Natural killer cell (primary cell): ENCODE measurements at regions of chr12 and their contacts with region 1.

Region 1: DNA sequence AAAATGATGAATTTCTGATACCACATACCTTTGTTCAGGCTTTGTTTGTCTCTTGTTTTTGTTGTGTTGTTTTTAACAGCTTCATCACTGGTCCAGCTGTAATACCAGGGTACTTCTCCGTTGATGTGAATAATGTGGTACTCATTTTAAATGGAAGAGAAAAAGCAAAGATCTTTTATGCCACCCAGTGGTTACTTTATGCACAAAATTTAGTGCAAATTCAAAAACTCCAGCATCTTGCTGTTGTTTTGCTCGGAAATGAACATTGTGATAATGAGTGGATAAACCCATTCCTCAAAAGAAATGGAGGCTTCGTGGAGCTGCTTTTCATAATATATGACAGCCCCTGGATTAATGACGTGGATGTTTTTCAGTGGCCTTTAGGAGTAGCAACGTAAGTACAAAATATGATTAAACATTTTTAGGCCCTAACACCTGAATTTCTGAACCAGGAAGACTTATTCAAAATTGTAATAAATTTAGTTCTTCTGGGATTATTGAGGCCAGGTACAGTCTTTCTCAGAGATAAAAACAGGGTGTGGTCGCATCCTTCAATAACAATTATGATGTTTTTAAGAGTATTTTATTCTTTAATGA is 22.4 kb downstream of the RXYLT1 start:
- DNase-seq: peak in 1 of 2 donors; percentile 52
- ATAC-seq: no peak
- H3K4me3 ChIP-seq: no peak overlapping the region
- H3K4me3 Mint-ChIP-seq: no peak overlapping the region
- H3K27ac ChIP-seq: no peak overlapping the region
- H3K27ac Mint-ChIP-seq: no peak overlapping the region
- H3K4me1 ChIP-seq: no peaks in the 10 kb centered on the region
- H3K4me1 Mint-ChIP-seq: no peaks in the 10 kb centered on the region
- H3K27me3 ChIP-seq: no peaks in the 10 kb centered on the region
- H3K27me3 Mint-ChIP-seq: no peaks in the 10 kb centered on the region
- CTCF ChIP-seq: peak; percentile 55

Region 2: DNA sequence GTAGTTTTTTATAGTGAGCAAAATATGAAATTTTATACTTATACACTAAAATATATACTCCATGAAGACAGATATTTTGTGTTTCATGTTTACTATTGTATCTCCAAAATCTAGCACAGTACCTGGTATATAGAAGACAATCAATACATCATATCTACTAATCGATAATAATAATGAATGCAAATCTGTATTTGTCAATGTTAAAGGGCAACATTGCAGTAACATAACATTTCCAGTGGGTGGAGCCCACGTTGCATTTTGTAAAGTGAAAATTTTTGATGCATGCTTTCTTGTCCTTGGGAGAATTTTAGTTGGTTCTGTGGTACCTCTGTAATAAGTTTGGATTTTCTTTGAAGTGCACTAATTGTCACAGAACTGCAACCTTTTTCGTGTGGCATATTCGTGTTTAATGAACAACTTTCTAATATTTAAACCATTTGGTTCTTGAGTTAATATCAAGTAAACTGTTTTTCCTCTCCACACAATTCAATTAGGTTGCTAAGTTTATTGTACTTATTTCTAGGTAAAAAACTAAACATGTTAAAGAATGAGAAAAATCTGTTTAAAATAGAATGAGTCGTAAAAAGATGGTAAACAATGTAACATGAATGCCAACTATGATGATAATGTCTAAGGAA is 698.5 kb before region 1 on chr12:
- intact Hi-C with region 1: loop called (anchors 2 kb)
- DNase-seq: peak in 1 of 2 donors; percentile 41
- ATAC-seq: no peak
- H3K4me3 ChIP-seq: no peak overlapping the region
- H3K4me3 Mint-ChIP-seq: no peak overlapping the region
- H3K27ac ChIP-seq: no peak overlapping the region
- H3K27ac Mint-ChIP-seq: no peak overlapping the region
- H3K4me1 ChIP-seq: no peaks in the 10 kb centered on the region
- H3K4me1 Mint-ChIP-seq: no peaks in the 10 kb centered on the region
- H3K27me3 ChIP-seq: no peaks in the 10 kb centered on the region
- H3K27me3 Mint-ChIP-seq: peaks cover 0 to 6% of the 10 kb centered on the region in 2 donors
- CTCF ChIP-seq: peak; percentile 76

Region 3: DNA sequence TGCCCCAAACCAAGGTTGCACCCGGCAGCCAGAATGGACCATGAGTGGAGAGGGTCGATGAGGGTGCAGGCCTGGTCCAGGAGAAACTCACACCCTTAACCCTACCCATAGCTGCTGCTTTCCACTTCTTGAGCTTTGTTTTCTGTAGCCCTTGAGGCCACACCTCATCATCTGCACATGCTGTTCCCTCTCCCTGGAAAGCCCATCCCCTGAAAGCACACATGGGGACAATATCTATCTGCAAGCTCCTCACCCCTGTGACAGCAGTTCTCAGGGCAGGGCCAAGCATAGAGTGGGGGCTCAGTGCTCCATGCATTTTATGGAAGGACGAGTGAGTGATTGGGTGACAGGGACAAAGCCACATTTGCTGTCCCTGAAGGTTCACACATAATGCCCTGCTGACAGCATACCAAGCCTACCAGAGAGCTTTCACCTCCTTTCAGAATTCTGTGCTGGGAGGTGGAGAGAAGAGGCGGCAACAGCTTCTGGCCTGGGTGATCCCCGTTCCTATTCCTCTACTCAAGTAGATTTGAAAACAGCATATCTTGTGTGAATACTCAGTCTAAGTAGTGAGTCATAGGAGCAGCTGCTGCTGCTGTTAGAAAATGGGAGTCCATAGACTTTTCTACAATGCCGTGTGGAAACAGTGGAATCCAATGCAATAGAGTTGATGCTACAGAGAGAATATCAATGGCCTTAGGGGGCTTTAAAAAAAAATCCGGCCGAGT is 87.0 kb after region 1 on chr12:
- intact Hi-C with region 1: no loop called
- DNase-seq: no peak
- ATAC-seq: no peak
- H3K4me3 ChIP-seq: no peak overlapping the region
- H3K4me3 Mint-ChIP-seq: no peak overlapping the region
- H3K27ac ChIP-seq: no peak overlapping the region
- H3K27ac Mint-ChIP-seq: no peak overlapping the region
- H3K4me1 ChIP-seq: no peaks in the 10 kb centered on the region
- H3K4me1 Mint-ChIP-seq: no peaks in the 10 kb centered on the region
- H3K27me3 ChIP-seq: no peaks in the 10 kb centered on the region
- H3K27me3 Mint-ChIP-seq: no peaks in the 10 kb centered on the region
- CTCF ChIP-seq: no peak